Tibial artery (tissue), 4 donors: ENCODE measurements at regions of chr11 and their contacts with region 1.

Region 1: DNA sequence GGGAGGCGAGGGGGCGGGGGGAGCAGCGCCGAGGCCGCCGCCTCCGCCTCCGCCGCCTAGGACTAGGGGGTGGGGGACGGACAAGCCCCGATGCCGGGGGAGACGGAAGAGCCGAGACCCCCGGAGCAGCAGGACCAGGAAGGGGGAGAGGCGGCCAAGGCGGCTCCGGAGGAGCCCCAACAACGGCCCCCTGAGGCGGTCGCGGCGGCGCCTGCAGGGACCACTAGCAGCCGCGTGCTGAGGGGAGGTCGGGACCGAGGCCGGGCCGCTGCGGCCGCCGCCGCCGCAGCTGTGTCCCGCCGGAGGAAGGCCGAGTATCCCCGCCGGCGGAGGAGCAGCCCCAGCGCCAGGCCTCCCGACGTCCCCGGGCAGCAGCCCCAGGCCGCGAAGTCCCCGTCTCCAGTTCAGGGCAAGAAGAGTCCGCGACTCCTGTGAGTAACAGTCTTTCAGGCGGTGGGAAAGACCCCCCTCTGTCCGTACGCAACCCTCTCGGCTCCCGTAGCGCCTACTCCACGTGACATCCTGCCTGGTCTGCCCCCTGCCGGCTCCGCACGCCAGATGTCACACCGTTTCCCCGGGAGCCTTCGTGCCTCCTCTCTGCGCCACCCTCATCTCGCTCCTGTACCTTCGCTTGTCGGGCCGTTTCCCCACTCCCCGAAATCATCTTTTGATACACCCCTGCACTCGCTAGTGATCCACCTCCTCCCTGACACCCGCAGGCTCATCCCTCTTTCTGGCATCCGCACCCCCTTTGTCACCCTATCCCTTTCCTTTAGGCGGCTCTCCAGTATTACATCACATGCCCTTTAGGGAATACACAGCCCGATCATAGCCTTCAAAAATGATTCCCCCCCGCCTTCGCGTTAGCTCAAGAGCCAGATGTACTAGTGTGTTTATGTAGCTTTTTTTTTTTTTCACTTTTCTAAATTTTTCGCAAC is 598 bp downstream of the ZFP91 start:
- DNase-seq: peak; percentile 93 to 96
- H3K4me3 ChIP-seq: peak overlapping the region; percentile 90 to 98
- H3K27ac ChIP-seq: peak overlapping the region; percentile 100
- H3K4me1 ChIP-seq: peaks cover 0 to 71% (median 42%) of the 10 kb centered on the region in 4 donors
- H3K27me3 ChIP-seq: no peaks in the 10 kb centered on the region
- CTCF ChIP-seq: peak; percentile 71 to 86

Region 2: DNA sequence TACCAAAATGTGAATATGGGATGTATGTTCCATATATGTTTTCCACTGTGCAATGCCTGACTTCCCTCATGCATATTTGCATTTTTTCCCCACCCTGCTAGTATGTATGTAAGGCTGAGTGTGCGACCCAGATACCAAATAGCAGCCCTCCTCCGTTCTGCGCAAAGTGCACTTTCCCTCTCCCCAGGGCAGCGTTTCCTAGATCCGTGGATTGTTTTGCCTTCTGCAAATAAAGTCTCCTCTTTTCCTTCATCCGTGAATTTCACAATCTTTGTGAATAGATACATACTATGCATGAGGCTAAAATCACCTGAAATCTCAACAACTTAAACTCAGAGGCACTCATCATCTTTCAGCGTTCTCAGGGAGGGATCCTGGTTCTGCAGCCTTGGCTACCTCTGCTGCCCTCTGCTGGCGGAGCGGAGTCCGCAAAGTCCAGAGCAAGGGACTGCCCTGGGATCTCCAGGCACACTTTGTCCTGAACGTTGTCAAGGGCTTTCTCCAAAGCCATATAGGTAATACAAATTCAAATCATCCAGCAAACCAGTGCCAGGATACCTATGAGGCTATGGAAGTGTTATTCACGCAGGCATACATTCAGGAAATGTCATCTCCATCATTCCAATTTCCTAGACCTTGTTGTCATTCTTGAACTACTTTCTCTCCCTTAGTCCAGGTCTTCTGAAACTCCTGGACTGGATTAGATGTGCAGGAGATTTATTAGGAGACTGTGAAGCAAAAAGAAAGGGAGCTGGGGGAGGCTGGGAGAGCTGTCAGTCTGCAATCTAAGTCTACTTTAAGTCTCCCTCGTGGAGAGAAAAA is 96.1 kb after region 1 on chr11:
- intact Hi-C with region 1: loop called (anchors 10 kb)
- DNase-seq: peak; percentile 69 to 77
- H3K4me3 ChIP-seq: no peak overlapping the region
- H3K27ac ChIP-seq: no peak overlapping the region
- H3K4me1 ChIP-seq: no peaks in the 10 kb centered on the region
- H3K27me3 ChIP-seq: peaks cover 0 to 19% of the 10 kb centered on the region in 2 donors
- CTCF ChIP-seq: peak; percentile 74 to 93